ENCODE measurements at regions of chr21 and their contacts with region 1.

Region 1: DNA sequence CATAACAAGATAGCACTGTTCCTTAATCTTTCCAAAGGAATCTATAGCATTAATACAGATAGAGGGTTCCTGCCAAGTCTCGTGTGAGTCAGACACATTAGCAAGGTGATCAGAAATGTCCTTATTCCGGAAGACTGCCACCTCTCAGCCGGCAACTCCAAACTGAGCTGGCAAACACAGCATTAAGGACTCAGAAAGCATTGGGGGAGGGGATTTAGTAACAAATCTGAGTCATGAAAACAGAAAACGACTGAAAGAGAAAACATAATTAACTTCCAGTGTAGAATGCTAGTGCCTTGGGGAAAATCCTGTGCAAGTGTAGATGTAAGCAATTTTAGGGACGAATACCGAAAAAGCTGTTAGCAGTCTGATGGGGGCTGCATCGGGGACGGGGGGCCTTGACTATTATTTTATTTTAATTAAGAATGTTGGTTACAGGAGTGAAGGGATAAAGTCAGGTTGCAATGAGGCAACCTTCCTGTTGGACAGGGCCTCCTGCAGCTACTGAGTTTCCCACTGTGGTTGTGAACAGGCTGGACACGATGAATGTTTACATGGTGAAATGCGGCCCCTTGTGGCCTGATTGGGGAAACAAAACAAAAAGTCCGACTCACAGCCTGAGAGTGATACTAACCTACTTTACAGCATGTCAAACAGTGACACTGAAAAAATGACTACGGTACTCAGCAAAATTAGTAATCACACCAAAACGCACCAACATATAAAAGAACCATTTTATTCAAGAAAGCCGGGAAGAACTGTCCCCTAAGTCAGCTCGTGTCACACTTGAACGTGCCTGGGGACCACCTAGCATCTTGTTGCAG is 20.7 kb downstream of the MIS18A start:
- DNase-seq: peak; percentile 74 to 83
- H3K4me3 ChIP-seq: no peak overlapping the region
- H3K27ac ChIP-seq: no peak overlapping the region
- H3K4me1 ChIP-seq: peaks cover 8 to 14% of the 10 kb centered on the region in 2 donors
- H3K27me3 ChIP-seq: no peaks in the 10 kb centered on the region
- CTCF ChIP-seq: peak; percentile 37 to 89 (median 72)
- POLR2A ChIP-seq: no peak

Region 2: GRCh38 chr21:31866077-31866511 is 392.1 kb before region 1 on chr21:
- intact Hi-C with region 1: loop called (anchors 5 kb)
- DNase-seq: peak; percentile 95
- H3K4me3 ChIP-seq: no peak overlapping the region
- H3K27ac ChIP-seq: no peak overlapping the region
- H3K4me1 ChIP-seq: peaks cover 0 to 4% of the 10 kb centered on the region in 2 donors
- H3K27me3 ChIP-seq: no peaks in the 10 kb centered on the region
- CTCF ChIP-seq: peak; percentile 84 to 94 (median 86)
- POLR2A ChIP-seq: no peak